Activated CD4-positive, alpha-beta T cell treated with anti-CD3 and anti-CD28 coated beads, Interleukin-2, amount 10 ng/mL, durations not matched to agents 24 days and 14 days (primary cell): ENCODE measurements at regions of chr7 and their contacts with region 1.

Region 1: GRCh38 chr7:50206453-50207250 is 97.9 kb upstream of the IKZF1 start:
- DNase-seq: peak; percentile 90
- H3K4me3 Mint-ChIP-seq: peak overlapping the region; percentile 69
- H3K27ac Mint-ChIP-seq: peak overlapping the region; percentile 95
- H3K4me1 Mint-ChIP-seq: peaks cover 77% of the 10 kb centered on the region
- H3K27me3 Mint-ChIP-seq: no peaks in the 10 kb centered on the region

Region 2: DNA sequence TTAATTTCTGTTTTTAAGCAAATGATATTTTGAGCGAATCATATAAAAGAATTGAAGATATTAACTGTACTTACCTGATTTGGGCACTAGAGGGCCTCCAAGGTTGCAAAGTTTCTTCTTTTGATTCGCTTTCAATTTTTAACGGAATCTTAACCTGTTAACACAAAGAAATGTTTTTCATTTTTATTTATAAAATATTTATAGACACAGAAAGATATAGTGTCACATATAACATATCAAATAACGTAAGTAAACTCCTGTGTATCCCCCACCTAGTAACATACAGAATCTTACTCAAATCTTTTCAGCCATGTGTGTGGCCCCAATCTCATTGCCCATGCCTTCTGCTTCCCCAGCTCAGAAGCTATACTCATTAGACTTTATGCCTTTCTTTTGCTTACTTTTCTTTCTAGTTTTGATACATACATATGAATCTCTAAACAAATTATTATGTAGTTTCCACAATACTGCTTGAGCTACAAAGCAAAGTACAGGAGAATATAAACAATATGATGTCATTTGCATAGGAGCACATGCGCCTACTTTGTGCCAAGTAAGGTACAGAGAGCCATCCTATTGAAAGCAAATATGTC is 64.1 kb before region 1 on chr7:
- intact Hi-C with region 1: loop called (anchors 1 kb)
- DNase-seq: peak; percentile 82
- H3K4me3 Mint-ChIP-seq: peak overlapping the region; percentile 57
- H3K27ac Mint-ChIP-seq: peak overlapping the region; percentile 67
- H3K4me1 Mint-ChIP-seq: peaks cover 31% of the 10 kb centered on the region
- H3K27me3 Mint-ChIP-seq: peaks cover 14% of the 10 kb centered on the region

Region 3: DNA sequence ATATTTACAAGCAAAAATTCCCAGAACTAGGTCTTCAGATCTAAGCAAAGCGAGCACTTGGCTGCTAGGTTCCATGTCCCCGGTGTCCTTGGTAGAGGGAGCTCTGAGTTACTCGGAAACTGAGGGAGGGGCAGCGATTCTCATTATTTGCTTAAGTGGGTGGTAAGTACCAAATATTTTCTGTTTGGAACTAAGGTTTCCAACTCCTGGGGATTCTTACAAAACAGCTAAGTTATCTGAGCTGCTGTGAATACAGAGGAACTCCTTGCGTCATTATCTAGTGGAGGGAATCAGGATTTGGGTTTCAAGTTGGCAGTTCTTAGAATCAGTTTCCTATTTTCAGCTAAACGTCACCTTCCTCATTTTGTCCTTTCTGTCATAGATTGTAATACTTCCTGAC is 21.1 kb after region 1 on chr7:
- intact Hi-C with region 1: loop called (anchors 1 kb)
- DNase-seq: peak; percentile 63
- H3K4me3 Mint-ChIP-seq: peak overlapping the region; percentile 71
- H3K27ac Mint-ChIP-seq: peak overlapping the region; percentile 89
- H3K4me1 Mint-ChIP-seq: peaks cover 34% of the 10 kb centered on the region
- H3K27me3 Mint-ChIP-seq: no peaks in the 10 kb centered on the region

Region 4: DNA sequence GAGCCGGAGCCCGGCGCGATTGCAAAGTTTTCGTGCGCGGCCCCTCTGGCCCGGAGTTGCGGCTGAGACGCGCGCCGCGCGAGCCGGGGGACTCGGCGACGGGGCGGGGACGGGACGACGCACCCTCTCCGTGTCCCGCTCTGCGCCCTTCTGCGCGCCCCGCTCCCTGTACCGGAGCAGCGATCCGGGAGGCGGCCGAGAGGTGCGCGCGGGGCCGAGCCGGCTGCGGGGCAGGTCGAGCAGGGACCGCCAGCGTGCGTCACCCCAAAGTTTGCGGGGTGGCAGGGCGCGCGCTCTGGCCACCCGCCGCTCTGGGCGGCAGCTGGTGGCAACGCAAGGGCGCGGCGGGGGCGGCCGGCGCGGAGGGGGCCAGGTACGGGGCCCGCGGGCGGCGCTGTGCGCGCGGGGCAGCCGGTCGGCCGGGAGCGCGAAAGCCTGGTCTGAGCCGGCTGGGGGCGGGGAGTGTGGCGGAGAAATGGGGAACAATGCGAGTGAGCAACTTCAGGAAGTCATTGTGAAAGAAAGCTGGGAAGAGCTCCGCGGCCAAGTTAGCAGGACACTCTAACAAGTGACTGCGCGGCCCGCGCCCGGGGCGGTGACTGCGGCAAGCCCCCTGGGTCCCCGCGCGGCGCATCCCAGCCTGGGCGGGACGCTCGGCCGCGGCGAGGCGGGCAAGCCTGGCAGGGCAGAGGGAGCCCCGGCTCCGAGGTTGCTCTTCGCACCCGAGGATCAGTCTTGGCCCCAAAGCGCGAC is 97.7 kb after region 1 on chr7 and contains the start of gene IKZF1:
- intact Hi-C with region 1: loop called (anchors 1 kb)
- DNase-seq: peak; percentile 87
- H3K4me3 Mint-ChIP-seq: peak within 1 kb of the TSS; percentile 95
- H3K27ac Mint-ChIP-seq: peak within 1 kb of the TSS; percentile 97
- H3K4me1 Mint-ChIP-seq: peaks cover 39% of the 10 kb centered on the region
- H3K27me3 Mint-ChIP-seq: peaks cover 4% of the 10 kb centered on the region
- total RNA-seq, gene IKZF1: 282 and 292 TPM in 2 replicates

Region 5: GRCh38 chr7:50369143-50370026 is 162.7 kb after region 1 on chr7:
- intact Hi-C with region 1: loop called (anchors 1 kb)
- DNase-seq: peak; percentile 87
- H3K4me3 Mint-ChIP-seq: peak overlapping the region; percentile 55
- H3K27ac Mint-ChIP-seq: peak overlapping the region; percentile 45
- H3K4me1 Mint-ChIP-seq: peaks cover 85% of the 10 kb centered on the region
- H3K27me3 Mint-ChIP-seq: no peaks in the 10 kb centered on the region

Region 6: GRCh38 chr7:50418086-50418515 is 211.4 kb after region 1 on chr7:
- intact Hi-C with region 1: loop called (anchors 1 kb)
- DNase-seq: peak; percentile 92
- H3K4me3 Mint-ChIP-seq: no peak overlapping the region
- H3K27ac Mint-ChIP-seq: no peak overlapping the region
- H3K4me1 Mint-ChIP-seq: peaks cover 31% of the 10 kb centered on the region
- H3K27me3 Mint-ChIP-seq: no peaks in the 10 kb centered on the region